MCF 10A (cell line): ENCODE measurements at regions of chr10 and their contacts with region 1.

Region 1: GRCh38 chr10:24415455-24416125 is 206.7 kb downstream of the KIAA1217 start:
- DNase-seq: peak; percentile 67
- H3K4me3 Mint-ChIP-seq: peak overlapping the region; percentile 25
- H3K27ac Mint-ChIP-seq: peak overlapping the region; percentile 96
- H3K4me1 Mint-ChIP-seq: peaks cover 23% of the 10 kb centered on the region
- H3K27me3 Mint-ChIP-seq: no peaks in the 10 kb centered on the region
- CTCF ChIP-seq: no peak

Region 2: GRCh38 chr10:23459344-23459939 is 956.1 kb before region 1 on chr10:
- CTCF ChIA-PET with region 1: no interaction called
- POLR2A ChIA-PET with region 1: no interaction called
- intact Hi-C with region 1: no loop called
- DNase-seq: peak; percentile 43
- H3K4me3 Mint-ChIP-seq: no peak overlapping the region
- H3K27ac Mint-ChIP-seq: no peak overlapping the region
- H3K4me1 Mint-ChIP-seq: peaks cover 8% of the 10 kb centered on the region
- H3K27me3 Mint-ChIP-seq: no peaks in the 10 kb centered on the region
- CTCF ChIP-seq: no peak

Region 3: DNA sequence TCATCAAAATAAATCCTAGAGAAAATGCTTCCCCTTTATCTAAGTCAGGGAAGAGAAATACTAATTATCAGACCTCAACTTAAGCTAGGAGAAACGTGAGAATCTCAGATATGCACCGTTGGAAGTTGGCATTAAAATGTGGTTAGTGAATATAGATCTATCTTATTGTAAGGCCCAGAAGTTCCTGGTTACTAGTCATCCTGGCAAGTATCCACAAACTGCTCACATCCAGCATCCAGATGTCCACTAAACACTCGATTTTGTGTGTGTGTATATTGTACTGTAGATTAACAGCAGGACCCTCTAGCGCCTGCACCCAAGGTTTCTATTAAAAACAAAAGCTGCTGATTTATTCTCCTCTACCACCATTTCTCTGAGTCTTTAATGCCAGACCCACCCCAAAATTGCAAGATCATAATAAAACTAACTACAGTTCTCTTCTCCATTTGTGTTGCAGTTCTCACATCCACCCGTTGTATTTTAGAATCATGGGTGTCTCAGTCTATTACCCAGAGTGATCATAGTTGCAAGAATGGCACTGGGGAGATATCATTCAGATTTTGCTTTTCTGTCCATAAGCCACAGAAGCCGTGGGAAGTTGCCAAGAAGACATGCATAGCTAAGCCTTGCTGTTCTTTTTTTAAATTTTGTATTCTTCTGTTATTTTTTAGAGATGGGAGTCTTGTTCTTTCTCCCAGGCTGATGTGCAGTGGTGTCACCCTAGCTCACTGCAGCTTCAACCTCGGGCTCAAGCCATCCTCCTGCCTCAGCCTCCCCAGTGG is 41.3 kb before region 1 on chr10:
- CTCF ChIA-PET with region 1: no interaction called
- POLR2A ChIA-PET with region 1: no interaction called
- intact Hi-C with region 1: no loop called
- DNase-seq: no peak
- H3K4me3 Mint-ChIP-seq: no peak overlapping the region
- H3K27ac Mint-ChIP-seq: peak overlapping the region; percentile 35
- H3K4me1 Mint-ChIP-seq: no peaks in the 10 kb centered on the region
- H3K27me3 Mint-ChIP-seq: no peaks in the 10 kb centered on the region
- CTCF ChIP-seq: no peak

Region 4: GRCh38 chr10:24428410-24428782 is 12.8 kb after region 1 on chr10:
- CTCF ChIA-PET with region 1: interaction called, 3 read pairs
- POLR2A ChIA-PET with region 1: interaction called, 16 read pairs
- intact Hi-C with region 1: no loop called
- DNase-seq: peak; percentile 63
- H3K4me3 Mint-ChIP-seq: no peak overlapping the region
- H3K27ac Mint-ChIP-seq: peak overlapping the region; percentile 70
- H3K4me1 Mint-ChIP-seq: peaks cover 10% of the 10 kb centered on the region
- H3K27me3 Mint-ChIP-seq: no peaks in the 10 kb centered on the region
- CTCF ChIP-seq: no peak

Region 5: DNA sequence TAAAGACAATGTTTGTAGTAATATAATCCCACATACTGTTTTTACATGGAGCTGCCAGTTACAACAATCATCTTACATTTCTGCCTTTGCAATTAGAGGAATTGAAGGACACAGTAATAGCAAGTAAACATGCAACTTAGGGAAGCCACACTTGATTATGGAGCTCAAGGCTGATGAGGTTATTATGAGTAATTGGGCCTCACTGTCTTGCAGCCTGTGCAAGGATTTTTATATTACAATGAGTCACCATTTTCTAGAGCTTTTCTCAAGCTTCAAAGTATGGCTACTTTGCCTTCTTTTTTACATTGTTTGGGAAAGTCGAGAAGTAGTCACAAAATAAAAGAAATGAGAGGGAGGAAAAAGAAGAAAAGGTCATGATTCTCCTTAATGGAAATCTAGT is 19.8 kb after region 1 on chr10:
- CTCF ChIA-PET with region 1: interaction called, 5 read pairs
- POLR2A ChIA-PET with region 1: interaction called, 19 read pairs
- intact Hi-C with region 1: no loop called
- DNase-seq: peak; percentile 56
- H3K4me3 Mint-ChIP-seq: no peak overlapping the region
- H3K27ac Mint-ChIP-seq: peak overlapping the region; percentile 36
- H3K4me1 Mint-ChIP-seq: peaks cover 11% of the 10 kb centered on the region
- H3K27me3 Mint-ChIP-seq: no peaks in the 10 kb centered on the region
- CTCF ChIP-seq: no peak

Region 6: GRCh38 chr10:24456322-24456721 is 40.7 kb after region 1 on chr10:
- CTCF ChIA-PET with region 1: no interaction called
- POLR2A ChIA-PET with region 1: interaction called, 16 read pairs
- intact Hi-C with region 1: no loop called
- DNase-seq: peak; percentile 72
- H3K4me3 Mint-ChIP-seq: peak overlapping the region; percentile 44
- H3K27ac Mint-ChIP-seq: peak overlapping the region; percentile 73
- H3K4me1 Mint-ChIP-seq: peaks cover 23% of the 10 kb centered on the region
- H3K27me3 Mint-ChIP-seq: no peaks in the 10 kb centered on the region
- CTCF ChIP-seq: no peak

Region 7: DNA sequence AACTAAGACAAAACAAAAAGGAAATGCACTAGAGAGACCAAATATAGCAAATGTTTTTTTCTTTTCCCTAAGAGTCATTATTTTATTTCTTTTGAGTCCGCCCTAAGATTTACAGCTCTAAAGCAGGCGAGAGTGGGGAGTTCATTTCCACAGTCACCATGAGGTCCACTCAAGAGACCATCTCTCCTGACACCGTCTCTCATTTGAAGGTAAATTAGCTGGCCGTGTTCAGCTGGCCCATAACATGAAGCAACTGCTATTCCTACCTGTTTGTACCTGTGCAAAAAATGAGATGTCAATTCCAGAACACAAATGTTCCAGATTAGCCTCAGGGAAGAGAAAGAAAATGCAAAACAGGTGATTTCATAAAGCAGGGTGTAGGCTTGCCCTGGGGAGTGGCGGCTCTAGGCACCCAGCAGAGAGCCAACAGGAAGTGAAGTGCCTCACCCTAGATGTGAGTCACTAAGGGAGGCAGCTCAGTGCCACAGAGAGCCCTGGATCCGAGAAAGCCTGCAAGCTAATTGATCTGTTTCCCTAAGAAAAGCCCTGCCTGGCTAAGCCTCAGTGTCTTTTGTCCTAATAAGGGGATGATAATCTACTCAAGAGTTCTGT is 68.0 kb after region 1 on chr10:
- CTCF ChIA-PET with region 1: no interaction called
- POLR2A ChIA-PET with region 1: interaction called, 21 read pairs
- intact Hi-C with region 1: no loop called
- DNase-seq: peak; percentile 98
- H3K4me3 Mint-ChIP-seq: peak overlapping the region; percentile 55
- H3K27ac Mint-ChIP-seq: peak overlapping the region; percentile 98
- H3K4me1 Mint-ChIP-seq: peaks cover 32% of the 10 kb centered on the region
- H3K27me3 Mint-ChIP-seq: no peaks in the 10 kb centered on the region
- CTCF ChIP-seq: no peak

Region 8: GRCh38 chr10:24503461-24504320 is 88.1 kb after region 1 on chr10:
- CTCF ChIA-PET with region 1: interaction called, 16 read pairs
- POLR2A ChIA-PET with region 1: no interaction called
- intact Hi-C with region 1: loop called (anchors 5 kb)
- DNase-seq: peak; percentile 81
- H3K4me3 Mint-ChIP-seq: no peak overlapping the region
- H3K27ac Mint-ChIP-seq: peak overlapping the region; percentile 23
- H3K4me1 Mint-ChIP-seq: no peaks in the 10 kb centered on the region
- H3K27me3 Mint-ChIP-seq: no peaks in the 10 kb centered on the region
- CTCF ChIP-seq: peak; percentile 86